SK-N-SH (cell line): ENCODE measurements at regions of chr22 and their contacts with region 1.

Region 1: GRCh38 chr22:19679522-19680101 is 34.7 kb upstream of the SEPTIN5 start:
- DNase-seq: peak; percentile 74
- H3K4me3 ChIP-seq: no peak overlapping the region
- H3K27ac ChIP-seq: no peak overlapping the region
- H3K4me1 ChIP-seq: no peaks in the 10 kb centered on the region
- H3K27me3 ChIP-seq: no peaks in the 10 kb centered on the region
- CTCF ChIP-seq: peak; percentile 71
- EP300 ChIP-seq: no peak
- RAD21 ChIP-seq: peak; percentile 60

Region 2: GRCh38 chr22:19652316-19652715 is 27.3 kb before region 1 on chr22:
- CTCF ChIA-PET with region 1: no interaction called
- POLR2A ChIA-PET with region 1: no interaction called
- DNase-seq: no peak
- H3K4me3 ChIP-seq: no peak overlapping the region
- H3K27ac ChIP-seq: no peak overlapping the region
- H3K4me1 ChIP-seq: no peaks in the 10 kb centered on the region
- H3K27me3 ChIP-seq: no peaks in the 10 kb centered on the region
- CTCF ChIP-seq: no peak
- EP300 ChIP-seq: no peak
- RAD21 ChIP-seq: no peak

Region 3: DNA sequence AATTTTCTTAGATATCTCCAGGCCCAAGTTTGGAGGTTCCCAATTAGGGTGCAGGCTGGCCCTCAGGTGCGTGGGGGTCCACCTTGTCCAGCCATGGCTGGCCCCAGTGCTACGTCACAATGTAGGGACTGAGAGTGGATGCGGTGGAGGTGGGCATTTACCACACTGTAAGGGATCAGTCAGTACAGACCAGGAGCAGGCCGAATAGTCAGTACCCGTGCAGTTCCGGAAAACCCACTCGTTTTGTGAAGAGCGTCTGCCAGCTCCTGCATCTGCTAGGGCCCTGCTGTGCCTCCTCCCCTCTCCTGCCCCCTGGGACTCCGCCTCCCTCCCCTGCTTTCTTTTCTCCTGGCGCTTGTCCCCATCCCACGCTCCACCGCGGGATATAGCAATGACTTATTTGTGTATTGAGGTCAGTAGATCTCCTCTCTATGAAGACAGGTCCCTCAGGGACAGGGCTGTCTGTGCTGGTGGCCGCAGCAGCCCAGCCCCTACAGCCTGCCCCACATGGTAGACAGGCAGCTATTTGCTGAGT is 15.7 kb before region 1 on chr22:
- CTCF ChIA-PET with region 1: interaction called, 13 read pairs
- POLR2A ChIA-PET with region 1: no interaction called
- DNase-seq: peak; percentile 85
- H3K4me3 ChIP-seq: no peak overlapping the region
- H3K27ac ChIP-seq: peak overlapping the region; percentile 70 to 92
- H3K4me1 ChIP-seq: peaks cover 15 to 23% of the 10 kb centered on the region in 2 experiments; a peak in 3 of 4 replicates
- H3K27me3 ChIP-seq: no peaks in the 10 kb centered on the region
- CTCF ChIP-seq: no peak
- EP300 ChIP-seq: no peak
- RAD21 ChIP-seq: no peak

Region 4: DNA sequence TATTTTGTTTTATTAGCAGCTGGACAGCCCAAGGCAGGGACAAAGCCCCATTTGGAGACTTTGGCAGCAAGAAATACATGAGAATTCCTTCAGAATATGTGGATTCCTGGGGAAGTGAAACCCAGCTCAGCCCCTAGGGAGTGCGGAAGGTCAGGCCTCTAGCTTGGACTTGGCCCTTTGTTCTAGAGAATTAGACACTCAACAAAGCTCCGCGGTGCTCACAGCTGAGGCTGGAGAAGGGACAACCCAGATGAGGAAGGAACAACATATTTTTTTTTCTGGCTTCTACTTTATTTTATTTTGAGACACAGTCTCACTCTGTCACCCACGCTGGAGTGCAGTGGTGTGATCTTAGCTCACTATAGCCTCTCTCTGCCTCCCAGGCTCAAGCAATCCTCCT is 10.0 kb before region 1 on chr22:
- CTCF ChIA-PET with region 1: interaction called, 13 read pairs
- POLR2A ChIA-PET with region 1: no interaction called
- DNase-seq: no peak
- H3K4me3 ChIP-seq: no peak overlapping the region
- H3K27ac ChIP-seq: no peak overlapping the region
- H3K4me1 ChIP-seq: peaks cover 6 to 10% of the 10 kb centered on the region in 2 experiments; a peak in 2 of 4 replicates
- H3K27me3 ChIP-seq: no peaks in the 10 kb centered on the region
- CTCF ChIP-seq: no peak
- EP300 ChIP-seq: no peak
- RAD21 ChIP-seq: no peak

Region 5: GRCh38 chr22:19691721-19692341 is 12.2 kb after region 1 on chr22:
- CTCF ChIA-PET with region 1: interaction called, 31 read pairs
- POLR2A ChIA-PET with region 1: no interaction called
- DNase-seq: no peak
- H3K4me3 ChIP-seq: no peak overlapping the region
- H3K27ac ChIP-seq: no peak overlapping the region
- H3K4me1 ChIP-seq: peaks cover 0 to 6% of the 10 kb centered on the region in 2 experiments; a peak in 1 of 4 replicates
- H3K27me3 ChIP-seq: no peaks in the 10 kb centered on the region
- CTCF ChIP-seq: no peak
- EP300 ChIP-seq: no peak
- RAD21 ChIP-seq: no peak

Region 6: DNA sequence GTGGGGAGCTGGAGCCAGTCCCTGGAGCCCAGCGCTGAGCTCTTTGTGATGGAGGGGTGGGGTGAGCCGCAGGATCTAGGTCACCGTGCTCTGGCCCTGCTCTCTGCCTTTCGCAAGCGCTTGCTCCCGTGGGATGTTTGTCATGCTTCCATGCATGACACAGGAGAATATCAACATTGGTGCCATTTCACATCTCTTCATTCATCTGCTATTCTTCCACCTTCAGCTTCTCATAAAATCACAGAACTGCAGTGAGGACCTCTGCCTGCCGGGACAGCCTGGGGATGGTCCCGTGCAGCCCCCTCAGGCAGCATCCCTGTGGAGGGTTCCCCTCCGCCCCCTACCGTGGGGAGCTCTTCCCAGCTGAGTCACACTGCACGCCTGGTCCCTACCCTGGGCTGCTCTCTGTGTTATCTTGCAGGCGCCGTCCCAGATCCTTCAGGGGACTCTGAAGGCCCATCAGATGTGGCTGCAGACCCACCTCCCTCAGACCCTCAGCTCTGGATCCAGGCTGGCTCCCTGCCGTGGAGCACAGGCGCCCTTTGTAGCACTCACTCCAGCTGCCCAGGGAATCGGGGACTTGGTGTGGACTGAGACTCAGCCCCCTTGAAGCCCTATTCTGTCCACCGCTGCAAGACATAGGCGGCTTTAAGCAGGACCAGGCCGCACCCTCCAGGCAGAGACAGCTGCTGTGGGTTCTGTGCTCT is 29.6 kb after region 1 on chr22:
- CTCF ChIA-PET with region 1: interaction called, 23 read pairs
- POLR2A ChIA-PET with region 1: no interaction called
- DNase-seq: peak; percentile 48
- H3K4me3 ChIP-seq: no peak overlapping the region
- H3K27ac ChIP-seq: no peak overlapping the region
- H3K4me1 ChIP-seq: peaks cover 0 to 20% of the 10 kb centered on the region in 2 experiments; a peak in 1 of 4 replicates
- H3K27me3 ChIP-seq: no peaks in the 10 kb centered on the region
- CTCF ChIP-seq: no peak
- EP300 ChIP-seq: no peak
- RAD21 ChIP-seq: no peak

Region 7: GRCh38 chr22:19717691-19718455 is 38.3 kb after region 1 on chr22:
- CTCF ChIA-PET with region 1: interaction called, 25 read pairs
- POLR2A ChIA-PET with region 1: no interaction called
- DNase-seq: peak; percentile 97
- H3K4me3 ChIP-seq: peak overlapping the region; percentile 62 to 67
- H3K27ac ChIP-seq: peak overlapping the region in 1 of 2 experiments; percentile 56; a peak in 1 of 4 replicates
- H3K4me1 ChIP-seq: peaks cover 0 to 42% of the 10 kb centered on the region in 2 experiments; a peak in 1 of 4 replicates
- H3K27me3 ChIP-seq: no peaks in the 10 kb centered on the region
- CTCF ChIP-seq: peak; percentile 64
- EP300 ChIP-seq: no peak
- RAD21 ChIP-seq: peak; percentile 75